GM12878 (cell line): ENCODE measurements at regions of chr7 and their contacts with region 1.

Region 1: DNA sequence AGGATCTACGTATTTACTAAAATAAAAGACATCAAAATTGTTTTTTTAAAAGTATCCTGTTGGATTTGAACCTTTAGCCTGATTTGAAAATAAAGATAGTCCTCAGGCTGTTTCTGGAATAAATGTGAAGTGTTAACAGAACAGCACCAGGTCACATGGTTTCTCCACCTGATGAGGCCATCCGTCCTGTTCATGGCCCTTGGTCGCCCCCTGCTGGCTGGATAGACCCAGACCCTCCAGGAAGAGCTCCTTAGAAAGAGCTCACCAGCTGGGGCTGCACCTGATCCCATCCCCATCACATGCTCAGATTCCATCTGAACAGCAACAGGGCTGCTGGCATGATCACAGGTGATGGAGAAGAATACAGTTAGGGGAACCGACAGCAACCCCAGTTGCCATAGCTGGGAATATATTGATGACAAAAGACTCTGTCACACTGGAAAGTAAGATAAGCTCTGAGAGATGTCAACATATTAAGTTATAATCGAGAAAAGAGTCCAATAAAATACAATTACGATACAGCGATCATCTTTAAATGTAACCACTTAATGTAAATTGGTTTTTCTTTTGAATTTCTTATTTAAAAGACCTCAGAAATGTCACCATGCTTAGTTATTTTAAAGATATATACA is 4.8 kb downstream of the OR2A14 start:
- DNase-seq: peak; percentile 8
- ATAC-seq: peak; percentile 100
- H3K4me3 ChIP-seq: no peak overlapping the region
- H3K27ac ChIP-seq: no peak overlapping the region
- H3K4me1 ChIP-seq: no peaks in the 10 kb centered on the region
- H3K27me3 ChIP-seq: no peaks in the 10 kb centered on the region
- CTCF ChIP-seq: peak; percentile 87 to 92 (median 89)
- EP300 ChIP-seq: no peak
- POLR2A ChIP-seq: no peak
- RAD21 ChIP-seq: peak; percentile 93

Region 2: DNA sequence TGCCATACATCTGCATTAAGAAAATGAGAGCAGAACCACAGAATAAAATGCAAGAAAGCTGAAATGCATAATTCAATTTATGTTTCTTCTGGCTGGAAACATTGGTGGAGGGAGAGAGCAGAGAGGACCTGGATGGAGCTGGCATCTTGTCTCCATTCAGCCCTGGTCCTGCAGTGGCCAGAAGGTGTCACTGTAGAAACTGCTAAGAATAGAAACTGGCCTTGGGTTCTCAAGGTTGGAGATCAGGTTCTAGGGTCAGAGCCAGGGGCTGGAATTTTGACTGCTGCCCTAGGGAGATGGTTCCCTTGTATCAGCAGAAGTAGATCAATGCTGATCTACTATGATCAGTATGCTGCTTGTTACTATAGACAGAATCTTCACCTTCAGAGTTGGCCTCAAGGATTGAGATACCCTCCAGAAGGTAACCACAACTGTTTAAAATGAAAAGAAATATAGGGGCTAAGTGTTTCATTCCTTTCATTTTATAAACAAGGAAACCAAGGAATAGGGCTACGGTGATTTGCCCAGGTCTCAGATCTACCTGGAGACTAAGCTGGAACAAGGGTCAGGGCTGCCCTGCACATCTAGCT is 637.0 kb before region 1 on chr7:
- CTCF ChIA-PET with region 1: interaction called, 12 read pairs
- POLR2A ChIA-PET with region 1: no interaction called
- RAD21 ChIA-PET with region 1: interaction called, 4 read pairs
- SMC1A ChIA-PET with region 1: interaction called, 6 read pairs
- in situ Hi-C with region 1: no loop called
- intact Hi-C with region 1: no loop called
- DNase-seq: no peak
- ATAC-seq: peak; percentile 75
- H3K4me3 ChIP-seq: no peak overlapping the region
- H3K27ac ChIP-seq: no peak overlapping the region
- H3K4me1 ChIP-seq: no peaks in the 10 kb centered on the region
- H3K27me3 ChIP-seq: no peaks in the 10 kb centered on the region; a peak in 1 of 4 replicates
- CTCF ChIP-seq: peak; percentile 42 to 52 (median 45); a peak in 5 of 6 replicates
- EP300 ChIP-seq: no peak
- POLR2A ChIP-seq: no peak
- RAD21 ChIP-seq: peak; percentile 41

Region 3: DNA sequence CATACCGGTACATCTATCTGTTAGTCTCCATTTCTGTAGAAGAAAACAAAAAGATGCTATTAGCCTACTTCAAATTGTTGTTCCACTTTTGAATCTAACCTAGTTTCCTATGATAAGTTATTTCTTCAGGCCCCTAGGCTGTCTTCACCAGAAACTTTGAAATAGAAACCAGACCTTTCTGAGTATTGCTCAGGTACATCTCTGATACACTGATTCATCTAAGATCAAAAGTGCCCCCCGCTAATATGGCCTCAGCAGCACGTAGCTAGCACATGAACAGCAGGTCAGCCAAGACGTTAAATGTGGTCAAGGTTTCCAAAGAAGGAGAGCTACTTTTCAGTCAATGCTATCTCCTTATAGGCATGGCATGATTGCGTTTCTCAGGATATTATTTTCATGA is 393.9 kb before region 1 on chr7:
- CTCF ChIA-PET with region 1: interaction called, 26 read pairs
- POLR2A ChIA-PET with region 1: no interaction called
- RAD21 ChIA-PET with region 1: interaction called, 35 read pairs
- SMC1A ChIA-PET with region 1: interaction called, 27 read pairs
- in situ Hi-C with region 1: no loop called
- intact Hi-C with region 1: no loop called
- DNase-seq: no peak
- ATAC-seq: no peak
- H3K4me3 ChIP-seq: no peak overlapping the region
- H3K27ac ChIP-seq: no peak overlapping the region
- H3K4me1 ChIP-seq: no peaks in the 10 kb centered on the region
- H3K27me3 ChIP-seq: no peaks in the 10 kb centered on the region
- CTCF ChIP-seq: no peak
- EP300 ChIP-seq: no peak
- POLR2A ChIP-seq: no peak
- RAD21 ChIP-seq: no peak

Region 4: GRCh38 chr7:143901668-143902331 is 226.0 kb before region 1 on chr7 and contains the start of gene TCAF1:
- CTCF ChIA-PET with region 1: interaction called, 19 read pairs
- POLR2A ChIA-PET with region 1: no interaction called
- RAD21 ChIA-PET with region 1: interaction called, 17 read pairs
- SMC1A ChIA-PET with region 1: interaction called, 4 read pairs
- in situ Hi-C with region 1: no loop called
- intact Hi-C with region 1: loop called (anchors 5 kb)
- DNase-seq: peak; percentile 55
- ATAC-seq: peak; percentile 96
- H3K4me3 ChIP-seq: peak within 1 kb of the TSS; percentile 87
- H3K27ac ChIP-seq: peak within 1 kb of the TSS; percentile 86
- H3K4me1 ChIP-seq: no peaks in the 10 kb centered on the region
- H3K27me3 ChIP-seq: no peaks in the 10 kb centered on the region
- CTCF ChIP-seq: peak; percentile 25 to 40 (median 38); a peak in 5 of 6 replicates
- EP300 ChIP-seq: no peak
- POLR2A ChIP-seq: peak; percentile 81
- RAD21 ChIP-seq: peak; percentile 32
- polyA plus RNA-seq, gene TCAF1: 2.2 to 3.2 TPM

Region 5: GRCh38 chr7:144063710-144064109 is 64.1 kb before region 1 on chr7:
- CTCF ChIA-PET with region 1: interaction called, 16 read pairs
- POLR2A ChIA-PET with region 1: no interaction called
- RAD21 ChIA-PET with region 1: interaction called, 10 read pairs
- SMC1A ChIA-PET with region 1: interaction called, 8 read pairs
- in situ Hi-C with region 1: no loop called
- intact Hi-C with region 1: no loop called
- DNase-seq: no peak
- ATAC-seq: peak; percentile 31; the same call in 1 of the 3 replicates
- H3K4me3 ChIP-seq: no peak overlapping the region
- H3K27ac ChIP-seq: no peak overlapping the region
- H3K4me1 ChIP-seq: no peaks in the 10 kb centered on the region
- H3K27me3 ChIP-seq: no peaks in the 10 kb centered on the region
- CTCF ChIP-seq: peak; percentile 32 to 54 (median 53); a peak in 5 of 6 replicates
- EP300 ChIP-seq: no peak
- POLR2A ChIP-seq: no peak
- RAD21 ChIP-seq: no peak

Region 6: DNA sequence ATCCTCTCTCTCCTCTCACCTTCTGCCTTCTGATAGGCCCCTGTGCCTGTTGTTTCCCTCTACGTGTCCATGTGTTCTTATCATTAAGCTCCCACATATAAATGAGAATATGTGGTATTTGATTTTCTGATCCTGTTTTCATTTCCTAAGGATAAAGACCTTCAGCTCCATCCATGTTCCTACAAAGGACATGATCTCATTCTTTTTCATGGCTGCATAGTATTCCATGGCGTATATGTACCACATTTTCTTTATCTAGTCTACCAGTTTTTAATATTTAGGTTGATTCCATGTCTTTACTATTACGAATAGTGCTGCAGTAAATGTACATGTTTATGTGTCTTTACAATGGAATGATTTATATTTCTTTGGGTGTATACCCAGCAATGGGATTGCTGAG is 37.2 kb before region 1 on chr7:
- CTCF ChIA-PET with region 1: no interaction called
- POLR2A ChIA-PET with region 1: no interaction called
- RAD21 ChIA-PET with region 1: no interaction called
- SMC1A ChIA-PET with region 1: no interaction called
- in situ Hi-C with region 1: no loop called
- intact Hi-C with region 1: no loop called
- DNase-seq: no peak
- ATAC-seq: no peak
- H3K4me3 ChIP-seq: no peak overlapping the region
- H3K27ac ChIP-seq: no peak overlapping the region
- H3K4me1 ChIP-seq: no peaks in the 10 kb centered on the region
- H3K27me3 ChIP-seq: no peaks in the 10 kb centered on the region
- CTCF ChIP-seq: no peak
- EP300 ChIP-seq: no peak
- POLR2A ChIP-seq: no peak
- RAD21 ChIP-seq: no peak